Lower leg skin (tissue), 4 donors: ENCODE measurements at regions of chr16 and their contacts with region 1.

Region 1: DNA sequence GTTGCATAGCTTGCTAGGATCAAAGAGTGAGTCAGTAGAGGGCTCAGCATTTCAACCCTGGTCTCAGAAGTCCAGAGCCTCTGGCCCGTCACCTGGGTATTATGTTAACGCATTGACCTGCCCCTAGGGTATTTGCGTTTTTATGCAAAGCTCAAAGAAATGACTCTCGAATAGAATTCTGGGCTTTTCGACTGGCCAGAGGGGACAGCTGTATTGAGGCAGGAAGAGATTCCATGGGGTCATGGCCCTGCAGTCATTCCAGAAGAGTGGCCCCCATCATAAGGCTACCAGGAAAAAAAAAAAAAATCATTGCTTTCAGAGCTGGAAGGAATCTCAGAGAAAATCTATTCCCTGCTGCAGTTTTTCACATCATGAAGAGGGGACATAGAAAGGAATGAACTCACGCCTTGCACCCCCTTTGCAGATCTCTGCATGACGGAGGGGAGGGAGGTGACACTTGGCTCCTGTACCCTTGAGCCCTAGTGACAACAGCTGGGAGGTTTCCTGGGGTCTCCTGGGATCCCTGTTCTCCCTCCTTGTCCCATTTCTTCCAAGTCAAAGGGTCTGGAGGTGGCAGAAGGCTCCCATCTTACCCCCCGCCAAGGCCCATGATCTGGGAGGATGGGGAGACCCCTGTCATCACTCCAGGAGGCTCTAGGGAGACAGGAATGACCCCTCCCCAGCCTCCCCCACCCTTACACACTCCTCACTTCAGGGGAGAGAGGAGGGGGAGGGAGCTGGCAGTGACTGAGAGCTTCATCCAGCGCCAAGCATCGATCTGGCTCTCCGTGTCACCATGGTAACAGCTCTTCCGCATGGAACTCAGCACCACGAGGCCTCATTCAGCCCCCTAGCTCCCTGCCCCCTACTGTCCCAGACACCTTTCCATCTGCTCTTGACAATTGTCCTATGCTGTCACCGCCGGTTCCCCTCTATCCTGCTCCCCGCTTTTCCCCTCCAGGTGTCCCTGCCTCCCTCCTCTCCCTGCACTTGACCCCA is 35.8 kb downstream of the GP2 start:
- DNase-seq: no peak
- H3K4me3 ChIP-seq: no peak overlapping the region
- CTCF ChIP-seq: no peak
- POLR2A ChIP-seq: no peak

Region 2: GRCh38 chr16:19912455-19913339 is 378.8 kb before region 1 on chr16:
- intact Hi-C with region 1: loop called (anchors 10 kb)
- DNase-seq: no peak
- H3K4me3 ChIP-seq: no peak overlapping the region
- CTCF ChIP-seq: no peak
- POLR2A ChIP-seq: no peak